ENCODE measurements at regions of chr9 and their contacts with region 1.

Region 1: GRCh38 chr9:101326501-101326900 is 58.3 kb downstream of the BAAT start:
- DNase-seq: no peak
- ATAC-seq: peak; percentile 63 to 77 (median 73)
- H3K4me3 ChIP-seq: peak overlapping the region in 2 of 3 donors; percentile 25 to 31
- H3K27ac ChIP-seq: peak overlapping the region; percentile 80 to 95 (median 95)
- H3K4me1 ChIP-seq: peaks cover 0 to 60% (median 23%) of the 10 kb centered on the region in 4 donors
- H3K27me3 ChIP-seq: no peaks in the 10 kb centered on the region
- CTCF ChIP-seq: no peak
- POLR2A ChIP-seq: no peak

Region 2: DNA sequence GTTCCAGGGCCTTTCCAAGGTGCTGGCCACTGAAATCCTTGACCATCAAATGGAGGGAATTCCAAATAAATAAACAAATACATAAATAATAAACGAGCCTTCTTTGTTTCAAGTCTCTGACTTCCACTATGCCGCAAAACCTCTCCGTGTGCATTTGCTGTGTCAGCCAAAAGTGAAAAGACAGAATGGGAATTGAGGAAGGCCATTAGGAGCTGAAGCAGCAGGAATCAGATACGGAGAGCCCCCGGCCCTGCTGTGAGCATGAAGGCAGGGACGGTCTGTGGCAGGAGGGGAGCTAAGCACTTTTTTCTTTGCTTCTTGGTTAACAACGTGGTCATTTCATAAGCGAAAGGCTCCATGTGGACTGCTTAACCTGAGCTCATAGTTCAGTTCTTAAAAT is 271.8 kb before region 1 on chr9:
- intact Hi-C with region 1: no loop called
- DNase-seq: no peak
- ATAC-seq: no peak
- H3K4me3 ChIP-seq: no peak overlapping the region
- H3K27ac ChIP-seq: no peak overlapping the region
- H3K4me1 ChIP-seq: no peaks in the 10 kb centered on the region
- H3K27me3 ChIP-seq: no peaks in the 10 kb centered on the region
- CTCF ChIP-seq: no peak
- POLR2A ChIP-seq: no peak

Region 3: GRCh38 chr9:101443364-101443771 is 116.9 kb after region 1 on chr9:
- intact Hi-C with region 1: loop called in 1 of 2 experiments (anchors 5 kb)
- DNase-seq: peak; percentile 87 to 97 (median 95)
- ATAC-seq: peak; percentile 70 to 87 (median 79)
- H3K4me3 ChIP-seq: peak overlapping the region in 2 of 3 donors; percentile 43 to 50
- H3K27ac ChIP-seq: peak overlapping the region; percentile 83 to 99 (median 95)
- H3K4me1 ChIP-seq: peaks cover 0 to 55% (median 9%) of the 10 kb centered on the region in 4 donors
- H3K27me3 ChIP-seq: no peaks in the 10 kb centered on the region
- CTCF ChIP-seq: no peak
- POLR2A ChIP-seq: peak; percentile 82